Tibial artery (tissue), 4 donors: ENCODE measurements at regions of chr1 and their contacts with region 1.

Region 1: DNA sequence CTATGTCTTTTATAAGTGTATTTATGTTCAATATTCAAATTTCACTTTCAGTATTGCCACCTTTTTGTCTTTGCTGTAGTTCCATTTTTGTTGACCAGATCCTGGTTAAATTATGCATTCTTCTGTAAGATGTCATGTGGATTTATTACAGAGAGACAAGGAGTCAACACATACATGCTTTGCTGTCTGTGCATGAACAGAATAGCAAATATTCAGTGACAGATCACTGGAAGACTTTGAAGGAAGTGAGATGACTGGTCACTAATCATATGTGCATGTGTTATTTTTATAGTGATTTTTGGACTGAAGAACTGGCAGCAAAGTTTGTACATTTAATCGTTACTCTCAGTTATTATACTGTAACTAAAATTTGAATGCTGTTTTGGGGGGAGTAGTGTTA is 117.2 kb downstream of the PLPPR5 start:
- DNase-seq: no peak
- H3K4me3 ChIP-seq: no peak overlapping the region
- H3K27ac ChIP-seq: no peak overlapping the region
- H3K4me1 ChIP-seq: no peaks in the 10 kb centered on the region
- H3K27me3 ChIP-seq: no peaks in the 10 kb centered on the region
- CTCF ChIP-seq: no peak

Region 2: DNA sequence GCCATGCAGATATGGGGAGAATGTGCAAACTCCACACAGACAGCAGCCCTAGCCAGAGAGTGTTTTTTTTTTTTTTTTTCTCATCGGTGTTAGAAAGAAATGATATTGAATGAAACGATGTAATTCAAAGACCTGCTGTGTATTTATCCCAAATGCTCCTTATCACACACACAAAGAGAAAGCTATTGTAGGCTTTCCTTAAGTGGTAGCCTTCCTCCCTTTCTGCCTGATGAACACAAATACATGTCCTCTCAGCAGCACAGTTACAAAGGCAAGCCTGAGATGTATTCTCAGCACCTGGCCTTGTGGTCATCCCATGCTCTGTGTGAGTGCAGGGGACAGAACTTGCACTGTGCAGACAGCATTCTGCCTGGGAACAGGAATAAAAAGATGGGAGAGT is 23.3 kb after region 1 on chr1:
- intact Hi-C with region 1: loop called (anchors 1 kb)
- DNase-seq: no peak
- H3K4me3 ChIP-seq: no peak overlapping the region
- H3K27ac ChIP-seq: no peak overlapping the region
- H3K4me1 ChIP-seq: no peaks in the 10 kb centered on the region
- H3K27me3 ChIP-seq: no peaks in the 10 kb centered on the region
- CTCF ChIP-seq: no peak